HepG2 (cell line): ENCODE measurements at regions of chr2 and their contacts with region 1.

Region 1: DNA sequence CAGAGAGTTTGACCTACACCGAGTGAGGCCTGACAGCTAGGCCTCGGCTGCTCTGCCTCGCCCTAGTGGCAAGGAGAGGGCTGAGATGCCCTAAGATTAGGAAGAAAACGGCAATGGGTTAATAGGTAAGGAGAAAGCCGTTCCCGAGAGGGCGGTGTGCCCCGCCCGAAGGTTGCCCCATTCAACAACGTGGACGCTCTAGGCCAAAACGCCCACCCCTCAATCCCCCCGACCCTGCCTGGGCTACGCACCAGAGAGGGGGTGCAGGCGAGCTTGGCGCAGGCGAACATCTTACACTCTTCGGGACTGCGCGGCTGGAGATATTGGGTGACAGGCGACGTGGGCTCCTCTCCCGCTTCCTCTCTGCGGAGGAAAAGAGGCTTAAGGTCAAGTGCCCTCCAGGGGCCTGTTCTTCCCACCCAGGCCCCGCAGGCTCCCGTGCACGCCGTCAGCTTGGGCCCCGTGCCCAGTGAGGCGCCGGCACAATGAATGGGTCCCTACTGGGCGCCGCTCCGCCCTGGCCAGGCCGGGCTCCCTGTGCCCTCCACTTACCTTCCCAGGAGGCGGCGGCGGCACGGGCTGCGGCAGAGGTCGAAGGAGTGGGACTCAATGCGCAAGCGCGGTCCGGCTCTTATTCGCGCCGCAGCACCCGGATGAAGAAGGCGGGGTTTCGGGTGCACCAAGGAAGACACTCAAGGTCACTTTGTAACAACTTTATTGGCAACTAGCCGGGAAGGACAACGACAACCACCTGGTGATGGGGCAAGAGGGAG is at the start of gene ATP5MC3:
- DNase-seq: peak; percentile 96
- ATAC-seq: peak; percentile 95
- H3K4me3 ChIP-seq: peak within 1 kb of the TSS; percentile 74 to 97 (median 82)
- H3K27ac ChIP-seq: peak within 1 kb of the TSS; percentile 88
- H3K4me1 ChIP-seq: peaks cover 32% of the 10 kb centered on the region
- H3K27me3 ChIP-seq: no peaks in the 10 kb centered on the region; a peak in 2 of 5 replicates
- CTCF ChIP-seq: peak; percentile 43; the same call in 1 of the 2 replicates
- EP300 ChIP-seq: peak in 1 of 2 experiments; percentile 57; a peak in 2 of 4 replicates
- POLR2A ChIP-seq: peak; percentile 83 to 98
- RAD21 ChIP-seq: no peak
- total RNA-seq, gene ATP5MC3: 676 and 882 TPM in 2 replicates

Region 2: DNA sequence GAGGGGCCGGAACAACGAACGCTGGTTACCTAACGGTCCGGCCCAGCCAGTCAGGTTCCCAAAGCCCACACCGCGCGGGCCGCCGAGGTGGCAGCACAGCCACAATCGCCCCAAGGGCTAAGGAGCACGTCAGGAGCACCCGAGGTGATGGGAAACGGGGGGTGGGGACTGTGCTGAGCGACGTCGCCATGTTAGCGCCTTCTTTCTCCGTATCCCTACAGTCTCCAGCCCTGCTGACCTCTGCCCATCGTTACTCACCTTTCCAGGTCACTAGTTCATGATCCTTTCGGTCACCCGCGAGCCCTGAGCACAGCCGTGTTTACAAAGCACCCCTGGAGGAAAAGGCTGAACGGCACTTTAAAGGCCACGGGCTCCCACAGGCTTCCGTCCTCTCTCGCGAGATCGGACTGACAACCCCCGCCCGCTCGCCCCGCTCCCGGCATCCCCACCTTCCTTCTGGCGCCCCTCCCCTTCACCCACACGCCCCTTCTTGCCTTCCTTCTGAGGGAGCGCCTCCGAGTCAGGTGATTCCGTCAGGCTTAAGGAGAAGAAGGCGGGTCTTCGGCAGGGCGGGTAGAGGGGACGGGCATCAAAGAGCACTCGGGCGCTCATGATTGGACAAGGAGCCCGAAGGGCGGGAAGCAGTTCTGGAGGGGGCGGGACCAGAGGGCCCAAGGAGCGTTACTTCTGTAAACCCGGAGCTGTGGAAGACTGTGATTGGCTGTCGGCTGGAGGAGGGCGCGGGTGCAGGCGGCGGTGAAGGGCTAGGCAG is 13.3 kb before region 1 on chr2 and contains the start of gene ATF2:
- CTCF ChIA-PET with region 1: no interaction called
- POLR2A ChIA-PET with region 1: interaction called, 50 read pairs
- in situ Hi-C with region 1: no loop called
- intact Hi-C with region 1: loop called (anchors 1 kb)
- DNase-seq: peak; percentile 100
- ATAC-seq: peak; percentile 93
- H3K4me3 ChIP-seq: peak within 1 kb of the TSS; percentile 84 to 100 (median 92)
- H3K27ac ChIP-seq: peak within 1 kb of the TSS; percentile 99
- H3K4me1 ChIP-seq: peaks cover 38% of the 10 kb centered on the region
- H3K27me3 ChIP-seq: no peaks in the 10 kb centered on the region; a peak in 1 of 5 replicates
- CTCF ChIP-seq: 0 out of 2 replicates have a peak, but pooled peaks have one; percentile 5
- EP300 ChIP-seq: peak in 1 of 2 experiments; percentile 10; a peak in 1 of 4 replicates
- POLR2A ChIP-seq: peak; percentile 86 to 98
- RAD21 ChIP-seq: peak; percentile 61
- total RNA-seq, gene ATF2: 95.1 and 135 TPM in 2 replicates

Region 3: DNA sequence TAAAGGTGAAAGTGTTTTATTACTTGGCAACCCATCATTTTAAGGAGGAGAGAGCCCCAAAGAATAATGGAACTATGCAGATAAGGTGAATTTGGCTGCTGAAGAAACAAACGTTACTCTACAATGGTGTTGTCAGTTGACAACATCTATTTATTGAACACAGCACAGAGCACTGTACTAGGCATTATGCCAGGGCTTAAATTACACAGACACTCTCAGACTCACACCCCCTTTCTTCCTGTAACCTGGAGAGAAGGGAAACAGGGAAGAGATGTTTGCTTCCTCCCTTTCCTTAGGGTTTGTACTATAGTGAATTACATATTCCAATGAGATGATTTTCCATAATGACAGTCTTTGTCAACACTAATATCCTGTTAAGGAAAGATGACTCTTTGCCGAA is 94.2 kb after region 1 on chr2:
- CTCF ChIA-PET with region 1: no interaction called
- POLR2A ChIA-PET with region 1: no interaction called
- in situ Hi-C with region 1: no loop called
- intact Hi-C with region 1: no loop called
- DNase-seq: no peak
- ATAC-seq: no peak
- H3K4me3 ChIP-seq: no peak overlapping the region
- H3K27ac ChIP-seq: no peak overlapping the region
- H3K4me1 ChIP-seq: no peaks in the 10 kb centered on the region
- H3K27me3 ChIP-seq: peaks cover 1 to 14% of the 10 kb centered on the region in 2 experiments; a peak in 3 of 5 replicates
- CTCF ChIP-seq: no peak
- EP300 ChIP-seq: no peak
- POLR2A ChIP-seq: no peak
- RAD21 ChIP-seq: no peak

Region 4: GRCh38 chr2:175684457-175684856 is 503.2 kb after region 1 on chr2:
- CTCF ChIA-PET with region 1: no interaction called
- POLR2A ChIA-PET with region 1: no interaction called
- in situ Hi-C with region 1: no loop called
- intact Hi-C with region 1: no loop called
- DNase-seq: peak; percentile 12
- ATAC-seq: 0 out of 3 replicates have a peak, but pooled peaks have one; percentile 32
- H3K4me3 ChIP-seq: no peak overlapping the region
- H3K27ac ChIP-seq: no peak overlapping the region
- H3K4me1 ChIP-seq: no peaks in the 10 kb centered on the region
- H3K27me3 ChIP-seq: no peaks in the 10 kb centered on the region
- CTCF ChIP-seq: peak; percentile 20; the same call in 1 of the 2 replicates
- EP300 ChIP-seq: no peak
- POLR2A ChIP-seq: no peak
- RAD21 ChIP-seq: no peak

Region 5: DNA sequence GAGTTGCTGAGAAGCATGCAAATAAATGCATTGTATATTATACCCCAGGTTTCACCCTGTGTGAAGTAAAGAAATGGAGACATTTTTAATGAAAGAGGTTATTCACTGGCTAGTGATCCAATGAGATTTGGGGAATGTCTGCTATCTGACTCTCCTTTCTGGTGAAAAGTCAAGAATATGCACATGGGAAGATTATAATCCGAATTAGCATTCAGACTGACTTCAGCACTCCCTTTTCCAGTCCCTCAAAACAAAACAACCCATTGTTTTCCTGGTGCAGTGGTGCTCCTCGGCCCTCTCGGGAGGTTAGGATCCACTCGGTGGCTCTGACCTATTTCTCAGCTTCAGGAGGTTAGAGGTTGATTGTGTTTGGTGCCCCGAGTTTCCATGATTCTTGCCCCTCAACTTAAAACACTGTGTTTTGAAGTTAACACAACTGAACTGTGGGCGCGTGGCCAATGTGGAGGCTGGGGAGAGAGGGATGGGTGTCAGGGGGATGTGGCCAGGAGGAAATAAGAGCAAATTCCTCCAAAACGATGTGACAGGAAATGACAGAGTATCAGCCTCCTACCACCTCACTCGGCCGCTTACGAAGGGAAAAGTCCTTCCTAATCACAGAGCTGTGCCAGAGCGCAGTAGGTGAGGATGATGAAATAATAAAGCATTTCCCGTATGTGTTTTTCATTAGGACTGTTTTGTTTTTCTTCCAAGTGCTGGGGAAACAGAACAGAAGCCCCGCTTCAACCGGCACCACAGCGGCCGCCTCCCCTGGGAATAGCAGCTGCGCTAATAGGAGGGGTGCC is 1528.1 kb after region 1 on chr2:
- CTCF ChIA-PET with region 1: no interaction called
- POLR2A ChIA-PET with region 1: no interaction called
- in situ Hi-C with region 1: no loop called
- intact Hi-C with region 1: no loop called
- DNase-seq: no peak
- ATAC-seq: no peak
- H3K4me3 ChIP-seq: no peak overlapping the region
- H3K27ac ChIP-seq: no peak overlapping the region
- H3K4me1 ChIP-seq: no peaks in the 10 kb centered on the region
- H3K27me3 ChIP-seq: peaks cover 3 to 23% of the 10 kb centered on the region in 2 experiments; a peak in 4 of 5 replicates
- CTCF ChIP-seq: no peak
- EP300 ChIP-seq: no peak
- POLR2A ChIP-seq: no peak
- RAD21 ChIP-seq: no peak